ENCODE measurements at regions of chr6 and their contacts with region 1.

Region 1: GRCh38 chr6:125201961-125202591 is 48.5 kb downstream of the TPD52L1 start:
- DNase-seq: peak in 1 of 2 donors; percentile 88
- H3K4me3 ChIP-seq: no peak overlapping the region
- CTCF ChIP-seq: no peak
- POLR2A ChIP-seq: no peak

Region 2: DNA sequence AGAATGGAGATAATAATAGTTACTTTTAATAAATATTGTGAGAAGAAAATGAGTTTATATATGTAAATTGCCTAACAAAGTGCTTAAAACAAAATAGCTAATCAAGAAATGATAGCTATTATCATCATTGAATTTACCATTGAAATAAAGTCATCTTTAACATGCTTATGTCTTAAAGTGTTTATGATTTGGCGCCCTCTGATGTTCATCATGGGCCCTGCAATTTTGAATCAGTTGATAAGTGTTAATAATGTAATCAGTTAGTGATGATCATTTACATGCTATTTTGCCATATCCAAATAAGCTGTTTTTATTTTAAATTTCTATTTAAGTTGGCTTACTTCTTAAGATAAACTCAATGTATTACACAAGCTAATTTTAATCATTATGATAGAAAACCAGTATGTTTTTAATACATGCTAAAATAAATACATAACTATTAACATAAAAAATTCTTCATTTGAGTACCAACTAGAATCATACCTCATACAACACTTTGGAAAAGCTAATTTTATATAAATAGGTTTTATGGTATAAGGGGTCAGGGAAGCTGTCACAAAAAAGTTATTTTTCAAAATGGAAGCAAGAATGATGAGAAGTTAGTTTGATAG is 87.7 kb before region 1 on chr6:
- intact Hi-C with region 1: no loop called
- DNase-seq: peak in 1 of 2 donors; percentile 70
- H3K4me3 ChIP-seq: no peak overlapping the region
- CTCF ChIP-seq: no peak
- POLR2A ChIP-seq: no peak

Region 3: DNA sequence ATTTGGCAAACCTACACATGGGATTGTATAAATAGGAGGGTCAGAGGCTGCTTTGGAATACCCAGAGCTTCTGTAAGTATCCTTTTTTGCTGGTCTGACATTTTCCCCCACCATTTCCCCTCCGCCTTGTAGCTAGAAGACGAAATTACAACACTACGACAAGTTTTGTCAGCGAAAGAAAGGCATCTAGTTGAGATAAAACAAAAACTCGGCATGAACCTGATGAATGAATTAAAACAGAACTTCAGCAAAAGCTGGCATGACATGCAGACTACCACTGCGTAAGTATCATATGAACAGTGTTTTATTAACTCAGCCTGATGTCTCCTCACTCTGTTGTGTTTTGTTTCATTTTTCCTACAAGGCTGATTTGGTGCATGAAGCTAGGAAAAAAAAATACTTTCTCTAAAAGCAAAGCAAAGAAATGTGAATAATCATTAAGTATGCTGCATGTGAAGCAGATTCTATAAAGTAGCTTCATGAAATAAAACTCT is 27.0 kb after region 1 on chr6:
- intact Hi-C with region 1: loop called (anchors 1 kb)
- DNase-seq: no peak
- H3K4me3 ChIP-seq: no peak overlapping the region
- CTCF ChIP-seq: no peak
- POLR2A ChIP-seq: no peak

Region 4: GRCh38 chr6:125325586-125325985 is 123.5 kb after region 1 on chr6:
- intact Hi-C with region 1: no loop called
- DNase-seq: no peak
- H3K4me3 ChIP-seq: no peak overlapping the region
- CTCF ChIP-seq: no peak
- POLR2A ChIP-seq: no peak

Region 5: DNA sequence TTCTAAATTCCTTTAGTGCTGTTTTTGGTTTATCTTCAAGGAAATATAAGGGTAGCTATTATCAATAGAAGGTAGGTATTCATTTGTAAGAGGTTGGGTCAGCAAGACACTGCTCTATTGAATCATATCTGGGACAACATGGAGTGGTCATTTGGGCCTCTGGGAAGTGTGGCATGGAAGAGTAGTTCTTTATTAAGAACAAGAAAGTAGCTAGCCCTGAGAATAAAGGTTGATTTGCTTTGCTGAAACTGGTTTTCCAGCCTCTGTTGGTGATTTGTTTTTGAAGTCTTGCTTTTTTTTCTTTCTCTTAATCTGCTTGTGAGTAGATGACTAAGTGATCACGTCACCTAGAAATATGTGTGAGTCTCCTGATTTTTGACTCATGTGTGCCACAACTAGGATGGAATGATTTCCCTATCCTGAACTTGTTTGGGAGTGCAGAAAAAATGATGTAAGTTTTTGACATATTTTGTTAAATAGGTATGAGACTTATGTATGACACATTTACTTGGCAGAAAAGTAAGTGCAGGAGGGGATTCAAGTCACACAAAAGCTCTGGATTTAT is 1519.6 kb after region 1 on chr6:
- intact Hi-C with region 1: no loop called
- DNase-seq: no peak
- H3K4me3 ChIP-seq: no peak overlapping the region
- CTCF ChIP-seq: no peak
- POLR2A ChIP-seq: no peak

Measured in lower leg skin (tissue), 4 donors.